ENCODE measurements at regions of chr20 and their contacts with region 1.

Region 1: GRCh38 chr20:10673988-10674711 is at the start of gene JAG1:
- DNase-seq: peak; percentile 94 to 98 (median 96)
- ATAC-seq: peak; percentile 88 to 90 (median 89)
- H3K4me3 ChIP-seq: peak within 1 kb of the TSS; percentile 73 to 98 (median 91)
- H3K27ac ChIP-seq: peak within 1 kb of the TSS; percentile 91 to 99 (median 98)
- H3K4me1 ChIP-seq: peaks cover 0 to 27% (median 12%) of the 10 kb centered on the region in 12 donors
- H3K27me3 ChIP-seq: no peaks in the 10 kb centered on the region
- CTCF ChIP-seq: no peak
- POLR2A ChIP-seq: peak; percentile 28 to 59
- total RNA-seq, gene JAG1: 20.9 to 42.6 (median 29.6) TPM

Region 2: DNA sequence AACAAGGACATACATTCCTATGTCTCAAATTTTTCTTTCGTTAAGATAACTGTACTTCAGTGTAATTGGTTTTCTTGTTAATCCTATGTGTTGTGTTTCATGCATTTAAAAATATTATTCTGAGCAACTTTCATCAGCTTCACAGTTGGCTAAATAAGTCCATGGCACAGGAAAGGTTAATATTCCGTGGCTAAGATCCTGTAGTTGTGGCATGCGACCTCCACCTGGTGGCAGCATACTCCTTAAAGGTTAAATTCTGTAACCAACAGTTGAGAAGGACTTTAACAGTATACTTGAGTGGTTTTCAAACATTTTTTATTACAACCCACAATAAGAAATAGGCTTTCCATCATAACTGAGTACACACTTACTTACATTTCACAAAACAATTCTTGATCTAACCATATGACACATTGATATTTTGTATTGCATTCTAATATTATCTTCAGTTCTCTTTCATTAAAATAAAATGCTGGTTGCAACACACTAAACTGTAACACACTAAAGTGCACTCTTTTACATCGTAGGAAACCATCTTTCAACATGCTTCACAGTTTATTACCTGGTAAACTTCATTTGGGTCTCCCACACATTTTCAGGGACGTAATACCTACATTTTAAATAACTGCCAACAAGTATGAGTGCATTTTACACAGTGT is 120.7 kb before region 1 on chr20:
- intact Hi-C with region 1: loop called in 6 of 10 experiments (anchors 2 to 10 kb)
- DNase-seq: peak; percentile 42 to 76 (median 60)
- ATAC-seq: peak; percentile 61 to 83 (median 66)
- H3K4me3 ChIP-seq: no peak overlapping the region
- H3K27ac ChIP-seq: no peak overlapping the region
- H3K4me1 ChIP-seq: peaks cover 0 to 43% (median 0%) of the 10 kb centered on the region in 12 donors
- H3K27me3 ChIP-seq: no peaks in the 10 kb centered on the region
- CTCF ChIP-seq: peak; percentile 68 to 89 (median 84)
- POLR2A ChIP-seq: no peak

Region 3: GRCh38 chr20:10565191-10565921 is 108.8 kb before region 1 on chr20:
- intact Hi-C with region 1: no loop called
- DNase-seq: peak in 1 of 5 donors; percentile 20
- ATAC-seq: peak; percentile 64 to 88 (median 78)
- H3K4me3 ChIP-seq: no peak overlapping the region
- H3K27ac ChIP-seq: peak overlapping the region in 7 of 12 donors; percentile 38 to 70 (median 51)
- H3K4me1 ChIP-seq: peaks cover 0 to 18% (median 0%) of the 10 kb centered on the region in 12 donors
- H3K27me3 ChIP-seq: no peaks in the 10 kb centered on the region
- CTCF ChIP-seq: no peak
- POLR2A ChIP-seq: no peak

Region 4: DNA sequence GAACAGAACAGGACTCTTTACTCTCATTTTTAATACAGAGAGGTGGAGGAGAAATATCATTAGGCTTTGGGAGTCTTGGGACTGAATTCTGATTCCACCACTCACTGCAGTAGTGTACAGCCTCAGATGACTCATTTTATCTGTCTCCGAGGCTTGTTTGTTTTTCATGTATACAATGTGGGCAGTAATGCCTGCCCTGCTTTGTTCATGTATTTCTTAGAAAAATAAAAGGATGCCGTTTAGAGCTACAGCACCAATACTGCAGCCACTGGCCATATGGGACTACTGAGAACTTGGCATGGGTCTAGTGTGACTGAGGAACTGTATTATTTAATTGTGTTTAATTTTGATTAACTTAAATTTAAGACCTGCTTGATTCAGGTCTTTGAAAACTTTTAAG is 40.9 kb after region 1 on chr20:
- intact Hi-C with region 1: loop called in 1 of 10 experiments (anchors 5 kb)
- DNase-seq: no peak
- ATAC-seq: no peak
- H3K4me3 ChIP-seq: no peak overlapping the region
- H3K27ac ChIP-seq: no peak overlapping the region
- H3K4me1 ChIP-seq: peaks cover 0 to 19% (median 11%) of the 10 kb centered on the region in 12 donors
- H3K27me3 ChIP-seq: no peaks in the 10 kb centered on the region
- CTCF ChIP-seq: no peak
- POLR2A ChIP-seq: no peak

Region 5: DNA sequence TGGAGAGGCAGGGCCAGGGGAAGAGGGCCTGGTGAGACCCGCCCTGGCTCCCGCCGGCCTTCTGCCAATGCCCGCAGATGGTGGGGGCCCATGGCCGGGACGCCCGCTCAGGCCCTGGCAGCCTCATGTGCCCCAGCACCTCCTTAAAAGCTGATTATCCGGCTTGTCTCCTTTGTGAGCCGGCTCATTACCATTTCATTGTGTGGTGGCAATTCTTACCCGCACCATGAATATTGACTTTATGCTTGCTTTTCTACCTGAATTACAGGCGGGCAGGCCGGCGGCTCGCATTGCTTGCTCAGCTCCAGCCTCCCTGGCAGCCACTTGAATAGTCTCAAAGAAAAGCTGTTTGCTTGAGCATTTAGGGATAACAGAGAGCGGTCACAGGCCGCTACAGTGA is 119.6 kb after region 1 on chr20:
- intact Hi-C with region 1: no loop called
- DNase-seq: no peak
- ATAC-seq: no peak
- H3K4me3 ChIP-seq: no peak overlapping the region
- H3K27ac ChIP-seq: no peak overlapping the region
- H3K4me1 ChIP-seq: peaks cover 0 to 7% (median 0%) of the 10 kb centered on the region in 12 donors
- H3K27me3 ChIP-seq: no peaks in the 10 kb centered on the region
- CTCF ChIP-seq: no peak
- POLR2A ChIP-seq: no peak

Region 6: GRCh38 chr20:10857352-10858070 is 183.4 kb after region 1 on chr20:
- intact Hi-C with region 1: loop called in 6 of 10 experiments (anchors 2 to 10 kb)
- DNase-seq: peak in 2 of 5 donors; percentile 36 to 37
- ATAC-seq: peak in 3 of 4 donors; percentile 67 to 92 (median 88)
- H3K4me3 ChIP-seq: no peak overlapping the region
- H3K27ac ChIP-seq: peak overlapping the region in 8 of 12 donors; percentile 0 to 61 (median 44)
- H3K4me1 ChIP-seq: peaks cover 0 to 40% (median 17%) of the 10 kb centered on the region in 12 donors
- H3K27me3 ChIP-seq: no peaks in the 10 kb centered on the region
- CTCF ChIP-seq: no peak
- POLR2A ChIP-seq: no peak

Region 7: GRCh38 chr20:10982692-10983091 is 308.5 kb after region 1 on chr20:
- intact Hi-C with region 1: loop called in 2 of 10 experiments (anchors 5 to 10 kb)
- DNase-seq: peak; percentile 55 to 88 (median 73)
- ATAC-seq: peak; percentile 97 to 99 (median 99)
- H3K4me3 ChIP-seq: peak overlapping the region in 1 of 12 donors; percentile 14
- H3K27ac ChIP-seq: peak overlapping the region in 11 of 12 donors; percentile 41 to 79 (median 66)
- H3K4me1 ChIP-seq: peaks cover 0 to 41% (median 16%) of the 10 kb centered on the region in 12 donors
- H3K27me3 ChIP-seq: no peaks in the 10 kb centered on the region
- CTCF ChIP-seq: no peak
- POLR2A ChIP-seq: no peak

Region 8: DNA sequence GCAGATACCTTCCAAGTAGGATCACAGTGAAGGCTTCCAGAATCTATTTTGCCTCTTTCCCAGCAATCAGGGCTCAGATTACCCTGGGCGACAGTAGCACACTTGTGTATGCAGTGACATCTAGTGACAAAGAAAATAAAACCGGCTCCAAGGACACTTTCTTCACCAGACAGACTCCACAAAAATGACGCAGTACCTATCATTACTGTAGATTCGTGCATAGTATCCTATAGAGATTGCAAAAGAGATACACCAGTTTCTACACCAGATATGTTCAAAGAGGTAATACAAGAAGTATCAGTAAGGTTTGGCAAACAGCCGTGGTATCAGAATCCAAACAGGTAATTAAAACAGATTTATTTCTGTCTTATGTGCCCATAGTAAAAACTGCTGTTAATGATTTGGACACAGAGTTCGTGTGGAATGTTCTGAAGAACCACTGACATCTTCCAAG is 600.0 kb after region 1 on chr20:
- intact Hi-C with region 1: loop called in 9 of 10 experiments (anchors 2 to 10 kb)
- DNase-seq: peak in 3 of 5 donors; percentile 35 to 44 (median 35)
- ATAC-seq: peak; percentile 61 to 91 (median 90)
- H3K4me3 ChIP-seq: no peak overlapping the region
- H3K27ac ChIP-seq: no peak overlapping the region
- H3K4me1 ChIP-seq: peaks cover 0 to 10% (median 2%) of the 10 kb centered on the region in 12 donors
- H3K27me3 ChIP-seq: no peaks in the 10 kb centered on the region
- CTCF ChIP-seq: peak; percentile 40 to 84 (median 72)
- POLR2A ChIP-seq: no peak